Esophagus squamous epithelium (tissue), 5 donors: ENCODE measurements at regions of chr6 and their contacts with region 1.

Region 1: DNA sequence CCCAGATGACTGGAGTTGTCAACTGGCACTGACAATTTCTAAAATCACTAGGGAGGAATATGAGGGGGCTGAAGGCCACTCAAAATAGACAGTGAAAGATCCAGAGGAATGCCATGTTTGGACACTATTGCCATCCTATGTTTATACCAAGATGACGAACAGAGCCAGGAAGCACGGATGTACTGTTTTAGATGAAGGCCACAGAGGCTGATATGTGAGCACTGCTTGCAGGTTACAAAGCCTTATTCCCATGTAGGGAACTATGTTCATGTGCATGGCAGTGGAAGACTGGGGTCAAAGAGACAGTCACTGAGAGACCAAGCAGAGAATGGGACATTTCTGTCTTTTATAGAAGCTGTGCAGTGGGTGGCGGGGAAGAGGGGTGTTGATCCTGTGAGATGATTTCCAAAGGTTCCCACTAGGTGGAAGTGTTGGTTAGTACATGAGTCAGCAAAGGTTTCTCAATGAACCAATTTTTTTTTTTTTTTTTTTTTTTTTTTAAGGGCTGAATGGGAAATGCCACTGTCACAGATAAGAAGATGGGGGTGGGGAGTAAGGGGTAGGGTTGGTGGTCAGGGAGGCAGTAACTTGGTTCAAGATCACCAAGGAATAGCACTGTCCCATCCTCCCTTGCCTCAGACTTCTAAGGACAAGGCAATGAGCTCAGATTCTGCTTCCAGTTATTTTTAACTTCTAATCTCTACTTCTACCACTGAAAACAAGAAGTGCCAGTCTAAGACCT is 46.7 kb upstream of the MOCS1 start:
- DNase-seq: no peak
- H3K4me3 ChIP-seq: no peak overlapping the region
- H3K27ac ChIP-seq: peak overlapping the region in 3 of 4 donors; percentile 62 to 87 (median 78)
- H3K4me1 ChIP-seq: peaks cover 0 to 65% (median 0%) of the 10 kb centered on the region in 3 donors
- H3K27me3 ChIP-seq: no peaks in the 10 kb centered on the region
- CTCF ChIP-seq: peak in 5 of 6 experiments; percentile 29 to 65 (median 63)
- POLR2A ChIP-seq: no peak

Region 2: GRCh38 chr6:40138273-40138720 is 157.3 kb after region 1 on chr6:
- intact Hi-C with region 1: no loop called
- DNase-seq: no peak
- H3K4me3 ChIP-seq: no peak overlapping the region
- H3K27ac ChIP-seq: no peak overlapping the region
- H3K4me1 ChIP-seq: no peaks in the 10 kb centered on the region
- H3K27me3 ChIP-seq: no peaks in the 10 kb centered on the region
- CTCF ChIP-seq: no peak
- POLR2A ChIP-seq: no peak

Region 3: GRCh38 chr6:40308533-40309306 is 327.7 kb after region 1 on chr6:
- intact Hi-C with region 1: loop called (anchors 5 kb)
- DNase-seq: no peak
- H3K4me3 ChIP-seq: no peak overlapping the region
- H3K27ac ChIP-seq: peak overlapping the region in 3 of 4 donors; percentile 29 to 61 (median 42)
- H3K4me1 ChIP-seq: peaks cover 6 to 14% (median 7%) of the 10 kb centered on the region in 3 donors
- H3K27me3 ChIP-seq: peaks cover 0 to 17% (median 0%) of the 10 kb centered on the region in 4 donors
- CTCF ChIP-seq: peak; percentile 55 to 98 (median 92)
- POLR2A ChIP-seq: no peak